Activated CD4-positive, alpha-beta memory T cell treated with anti-CD3 and anti-CD28 coated beads for 36 hours (primary cell): ENCODE measurements at regions of chr1 and their contacts with region 1.

Region 1: GRCh38 chr1:9629445-9630201 is 21.9 kb upstream of the PIK3CD start:
- DNase-seq: peak; percentile 90
- H3K4me3 Mint-ChIP-seq: peak overlapping the region; percentile 87
- H3K27ac Mint-ChIP-seq: peak overlapping the region; percentile 97
- H3K4me1 Mint-ChIP-seq: peaks cover 59% of the 10 kb centered on the region
- H3K27me3 Mint-ChIP-seq: no peaks in the 10 kb centered on the region

Region 2: DNA sequence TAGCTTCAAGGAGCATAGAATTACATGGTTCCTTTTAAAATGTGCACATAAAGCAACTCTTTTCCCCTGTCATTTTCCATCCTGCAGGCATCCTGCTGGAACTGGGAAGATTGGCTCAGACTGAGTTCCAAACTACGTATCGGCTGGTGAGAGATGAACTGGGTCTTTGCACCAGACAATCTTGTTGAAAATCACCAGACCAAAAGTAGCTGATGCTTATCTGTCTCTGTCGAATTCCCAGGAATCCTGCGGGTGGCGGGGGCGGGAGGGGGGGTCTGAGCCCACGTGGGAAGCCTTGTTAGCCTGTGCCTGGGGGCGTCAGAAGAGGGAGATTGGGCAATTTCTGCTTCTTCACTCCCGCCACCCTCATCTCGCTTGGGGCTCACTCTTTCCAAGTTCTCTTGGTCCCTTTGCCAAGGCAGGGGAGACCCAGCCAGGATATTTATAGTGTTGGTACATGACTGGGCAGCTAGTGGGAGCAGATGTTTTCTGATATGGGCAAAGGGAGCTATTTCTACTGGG is 180.5 kb before region 1 on chr1:
- CTCF ChIA-PET with region 1: no interaction called
- POLR2A ChIA-PET with region 1: no interaction called
- intact Hi-C with region 1: no loop called
- DNase-seq: no peak
- H3K4me3 Mint-ChIP-seq: no peak overlapping the region
- H3K27ac Mint-ChIP-seq: no peak overlapping the region
- H3K4me1 Mint-ChIP-seq: no peaks in the 10 kb centered on the region
- H3K27me3 Mint-ChIP-seq: no peaks in the 10 kb centered on the region

Region 3: DNA sequence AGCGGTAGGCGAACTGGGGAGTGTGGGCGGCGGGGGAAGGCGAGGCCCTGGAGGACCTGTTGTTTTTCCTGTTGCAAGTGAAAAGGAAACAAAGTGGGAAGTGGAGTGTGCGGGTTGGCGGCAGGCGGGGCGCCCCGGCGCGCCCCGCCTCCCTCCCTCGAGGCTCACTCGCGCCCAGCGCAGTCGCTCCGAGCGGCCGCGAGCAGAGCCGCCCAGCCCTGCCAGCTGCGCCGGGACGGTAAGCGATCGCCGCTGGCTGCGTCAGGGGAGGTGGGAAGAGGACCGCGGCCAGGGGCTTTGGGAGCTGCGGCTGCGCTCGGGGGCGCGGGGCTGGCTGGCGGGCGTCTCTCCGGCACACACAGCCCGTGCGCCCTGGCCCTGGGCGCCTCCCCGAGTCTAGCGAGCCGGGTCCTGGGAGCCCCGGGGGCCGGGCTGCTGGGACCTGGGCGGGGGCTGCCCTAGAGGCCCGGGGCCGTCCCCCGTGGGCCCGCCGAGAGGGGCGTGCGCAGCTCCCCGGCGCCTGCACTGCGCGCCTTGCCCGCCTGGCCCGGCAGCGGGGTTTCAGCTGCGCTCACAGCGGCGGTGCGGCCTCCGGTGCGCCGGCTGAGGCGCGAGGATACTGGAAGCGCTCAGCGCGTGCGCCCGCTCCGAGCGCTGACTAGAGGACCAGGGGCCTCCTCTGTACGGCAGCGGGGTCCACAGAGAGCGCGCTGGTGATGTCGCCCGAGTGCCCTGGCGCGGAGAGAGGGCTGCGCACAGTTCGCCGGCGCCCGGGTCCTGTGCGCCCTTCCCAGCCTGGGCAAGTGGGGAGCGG is 22.1 kb after region 1 on chr1 and contains the start of gene PIK3CD:
- CTCF ChIA-PET with region 1: interaction called, 113 read pairs
- POLR2A ChIA-PET with region 1: interaction called, 114 read pairs
- intact Hi-C with region 1: loop called (anchors 1 kb)
- DNase-seq: peak; percentile 61
- H3K4me3 Mint-ChIP-seq: peak within 1 kb of the TSS; percentile 97
- H3K27ac Mint-ChIP-seq: peak within 1 kb of the TSS; percentile 100
- H3K4me1 Mint-ChIP-seq: peaks cover 39% of the 10 kb centered on the region
- H3K27me3 Mint-ChIP-seq: no peaks in the 10 kb centered on the region
- total RNA-seq, gene PIK3CD: 129 to 138 TPM

Region 4: DNA sequence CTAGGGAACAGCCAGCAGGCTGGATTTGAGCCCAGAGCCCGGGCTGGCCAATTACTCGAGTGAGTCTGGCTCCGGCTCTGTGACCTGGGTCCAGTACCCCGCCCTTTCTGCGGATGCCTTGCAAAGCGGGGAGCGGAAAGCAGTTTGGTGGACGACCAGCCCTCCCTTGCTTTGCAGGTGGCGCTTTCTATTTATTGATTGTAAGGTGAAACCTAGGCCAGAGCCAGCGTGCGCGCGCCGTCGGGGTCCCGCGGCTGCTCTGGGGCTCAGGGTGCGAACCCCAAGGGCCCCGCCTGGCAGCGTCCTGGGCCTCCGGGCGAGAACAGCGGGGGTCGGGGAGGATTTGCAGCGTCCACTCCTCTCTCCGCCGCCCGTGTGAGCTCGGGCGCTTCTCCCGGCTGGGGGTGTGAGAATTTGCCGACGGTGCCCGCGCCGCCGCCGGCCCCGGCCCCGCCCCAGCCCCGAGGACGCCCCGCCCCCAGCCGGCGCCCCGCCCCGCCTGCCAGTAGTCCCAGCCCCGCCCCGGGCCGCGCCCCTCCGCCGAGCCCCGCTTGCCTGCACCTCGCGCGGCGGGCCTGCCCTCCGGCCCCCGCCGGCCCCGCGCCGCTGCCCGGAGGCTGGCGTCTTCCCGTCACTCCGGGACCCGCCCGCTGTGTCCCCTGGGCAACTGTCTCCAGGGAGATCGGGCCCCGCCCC is 59.5 kb after region 1 on chr1:
- CTCF ChIA-PET with region 1: interaction called, 19 read pairs
- POLR2A ChIA-PET with region 1: interaction called, 7 read pairs
- intact Hi-C with region 1: loop called (anchors 2 kb)
- DNase-seq: peak; percentile 85
- H3K4me3 Mint-ChIP-seq: peak overlapping the region; percentile 64
- H3K27ac Mint-ChIP-seq: no peak overlapping the region
- H3K4me1 Mint-ChIP-seq: peaks cover 70% of the 10 kb centered on the region
- H3K27me3 Mint-ChIP-seq: no peaks in the 10 kb centered on the region

Region 5: GRCh38 chr1:9724706-9725476 is 95.3 kb after region 1 on chr1:
- CTCF ChIA-PET with region 1: interaction called, 74 read pairs
- POLR2A ChIA-PET with region 1: interaction called, 5 read pairs
- intact Hi-C with region 1: loop called (anchors 1 kb)
- DNase-seq: peak; percentile 80
- H3K4me3 Mint-ChIP-seq: no peak overlapping the region
- H3K27ac Mint-ChIP-seq: peak overlapping the region; percentile 52
- H3K4me1 Mint-ChIP-seq: peaks cover 48% of the 10 kb centered on the region
- H3K27me3 Mint-ChIP-seq: no peaks in the 10 kb centered on the region

Region 6: DNA sequence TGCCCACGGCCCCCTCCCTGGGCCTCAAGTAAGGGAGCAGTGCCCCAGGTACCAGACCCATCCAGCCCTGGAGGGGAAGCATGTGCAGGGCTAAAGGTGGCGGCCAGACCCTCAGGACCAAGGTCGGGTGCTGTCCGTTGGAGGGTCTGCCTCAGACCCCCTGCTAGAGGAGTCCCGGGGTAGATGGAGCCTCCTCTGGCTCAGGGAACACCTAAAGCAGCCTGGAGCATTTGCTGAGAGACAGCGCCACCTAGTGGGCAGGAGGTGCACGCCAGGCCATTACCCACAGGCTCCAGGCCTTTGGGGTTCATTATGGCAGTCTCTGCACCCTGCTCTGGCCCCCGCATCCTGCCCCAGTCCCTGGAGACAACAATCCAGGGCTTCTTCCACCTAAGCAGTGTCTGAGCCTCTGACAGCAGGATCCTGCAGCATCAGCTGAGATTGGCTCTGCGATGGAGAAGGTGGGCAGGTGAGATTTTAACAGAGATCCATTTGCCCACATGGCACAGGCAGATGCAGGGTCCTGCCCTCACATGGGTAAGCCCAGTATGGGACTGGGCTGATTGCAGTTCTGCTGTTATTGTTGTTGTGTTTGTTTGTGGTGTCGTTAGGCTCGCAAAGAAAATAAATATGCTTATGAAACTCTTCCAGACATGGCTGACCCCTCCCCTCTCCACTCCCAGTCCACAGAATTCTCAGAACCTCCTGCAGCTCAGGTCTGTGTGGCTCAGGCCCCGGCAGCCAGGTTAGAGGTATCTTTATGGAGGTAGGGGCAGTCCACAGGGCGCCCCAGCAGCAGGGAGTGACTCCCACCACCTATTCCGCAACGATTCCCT is 238.0 kb after region 1 on chr1:
- CTCF ChIA-PET with region 1: interaction called, 11 read pairs
- POLR2A ChIA-PET with region 1: no interaction called
- intact Hi-C with region 1: loop called (anchors 1 kb)
- DNase-seq: peak; percentile 92
- H3K4me3 Mint-ChIP-seq: no peak overlapping the region
- H3K27ac Mint-ChIP-seq: no peak overlapping the region
- H3K4me1 Mint-ChIP-seq: no peaks in the 10 kb centered on the region
- H3K27me3 Mint-ChIP-seq: no peaks in the 10 kb centered on the region